Right ventricle myocardium inferior (tissue), 1 donor: ENCODE measurements at regions of chr18 and their contacts with region 1.

Region 1: DNA sequence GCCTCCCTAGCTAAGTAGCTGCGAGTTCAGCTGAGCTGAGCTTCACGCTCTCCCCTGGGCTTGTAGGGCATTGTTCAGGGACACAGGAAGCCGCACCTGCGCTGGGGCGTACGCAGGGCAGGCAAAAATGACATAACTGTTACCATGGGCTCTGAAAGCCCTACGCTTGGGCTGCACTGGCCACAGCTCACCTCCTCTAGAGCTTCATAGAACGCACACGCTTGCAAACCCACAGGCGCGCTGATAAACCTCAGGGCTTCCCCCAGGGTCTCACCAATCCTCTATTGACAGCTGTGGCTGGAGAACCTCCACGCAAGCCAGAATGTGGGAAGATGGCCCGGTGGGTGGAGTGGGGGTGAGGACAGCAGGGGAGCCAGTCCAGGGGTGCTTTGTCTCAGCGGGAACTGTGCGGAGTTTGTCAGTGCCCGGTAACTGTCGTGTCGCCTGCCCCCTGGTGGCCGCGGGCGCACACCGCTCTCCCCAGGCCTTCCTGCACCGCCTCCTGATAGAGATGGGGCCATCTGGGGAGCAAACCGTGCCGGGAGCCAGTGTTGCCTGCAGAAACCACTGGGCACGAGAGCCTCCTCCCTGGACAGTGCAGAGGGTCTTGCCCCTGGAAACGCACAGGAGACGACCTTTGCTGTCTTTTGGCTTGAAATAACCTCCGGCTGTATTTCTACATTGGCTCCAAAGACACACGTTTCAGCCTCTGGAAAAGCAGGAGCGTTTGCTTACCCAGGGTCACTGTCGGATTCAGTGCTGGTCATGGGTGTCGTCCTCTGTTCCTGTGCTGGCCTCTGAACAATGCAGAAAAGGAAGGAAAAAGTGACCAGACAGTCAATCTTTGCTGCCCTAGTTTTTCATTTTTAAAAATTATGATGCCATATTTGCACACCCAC is 17.0 kb upstream of the CIDEA start:
- DNase-seq: peak; percentile 81
- ATAC-seq: peak; percentile 92

Region 2: GRCh38 chr18:12060182-12060870 is 176.9 kb before region 1 on chr18:
- intact Hi-C with region 1: loop called (anchors 10 kb)
- DNase-seq: peak; percentile 68
- ATAC-seq: no peak

Region 3: GRCh38 chr18:12092398-12093229 is 144.6 kb before region 1 on chr18:
- intact Hi-C with region 1: loop called (anchors 5 kb)
- DNase-seq: peak; percentile 69
- ATAC-seq: peak; percentile 67